GM18951 (cell line): ENCODE measurements at regions of chr10 and their contacts with region 1.

Region 1: GRCh38 chr10:123154092-123154921 is at the start of gene BUB3:
- POLR2A ChIP-seq: peak; percentile 93

Region 2: DNA sequence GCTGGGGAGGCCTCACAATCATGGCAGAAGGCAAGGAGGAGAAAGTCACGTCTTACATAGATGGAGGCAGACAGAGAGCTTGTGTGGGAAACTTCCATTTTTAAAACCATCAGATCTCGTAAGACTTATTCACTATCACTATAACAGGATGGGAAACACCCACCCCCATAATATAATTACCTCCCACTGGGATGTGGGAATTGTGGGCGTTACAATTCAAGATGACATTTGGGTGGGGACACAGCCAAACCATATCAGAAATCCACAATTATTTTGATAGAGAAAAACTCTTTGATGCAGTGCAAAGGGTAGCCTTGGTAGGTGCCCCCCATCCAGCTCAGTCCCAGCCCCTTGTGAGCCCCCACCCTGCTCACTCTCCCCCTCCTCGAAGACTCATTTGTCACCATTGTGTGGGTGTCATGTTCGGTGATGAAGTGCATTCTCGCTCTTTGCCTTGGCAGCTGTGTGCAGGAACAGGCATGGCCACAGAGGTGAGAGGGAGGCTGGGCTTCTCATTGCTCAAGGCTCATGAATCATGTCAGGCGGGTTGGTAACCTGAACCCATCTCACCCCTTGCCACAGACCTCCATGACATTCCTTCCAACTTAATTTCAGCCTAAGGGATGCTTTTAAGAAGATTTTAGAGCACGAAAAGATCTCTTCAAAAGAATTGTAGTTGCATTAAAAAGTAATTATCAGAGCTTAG is 75.8 kb after region 1 on chr10:
- in situ Hi-C with region 1: no loop called
- POLR2A ChIP-seq: no peak

Region 3: GRCh38 chr10:123272171-123272570 is 117.9 kb after region 1 on chr10:
- in situ Hi-C with region 1: no loop called
- POLR2A ChIP-seq: no peak

Region 4: DNA sequence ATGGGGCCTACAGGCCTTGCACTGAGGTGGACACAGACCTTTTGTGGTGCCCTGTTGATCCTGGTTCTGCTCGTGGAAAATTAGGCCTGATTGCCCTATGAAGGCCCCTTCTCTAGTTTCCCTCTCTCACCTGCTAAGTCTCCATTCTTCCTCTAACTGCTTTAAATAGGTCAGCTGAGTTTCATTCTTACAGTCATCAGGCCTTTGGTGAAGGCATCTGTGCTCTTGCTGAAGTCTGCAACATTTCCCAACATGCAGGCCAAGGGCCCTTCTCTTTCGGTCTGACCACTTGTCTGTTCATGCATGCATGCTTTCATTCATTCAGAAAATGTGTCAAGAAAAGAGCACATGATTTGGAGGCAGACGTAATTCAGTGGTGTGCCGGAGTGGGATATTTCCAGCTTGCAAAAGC is 243.9 kb after region 1 on chr10:
- in situ Hi-C with region 1: loop called (anchors 10 kb)
- POLR2A ChIP-seq: peak; percentile 36